Activated B cell treated with CpG ODN at 0.5 μM for 24 hours (primary cell): ENCODE measurements at regions of chr11 and their contacts with region 1.

Region 1: GRCh38 chr11:33736148-33736809 is at the start of gene CD59:
- DNase-seq: peak; percentile 82
- ATAC-seq: peak; percentile 81
- H3K4me3 Mint-ChIP-seq: peak within 1 kb of the TSS; percentile 88
- H3K27ac Mint-ChIP-seq: peak within 1 kb of the TSS; percentile 81
- H3K4me1 Mint-ChIP-seq: peaks cover 39% of the 10 kb centered on the region
- H3K27me3 Mint-ChIP-seq: no peaks in the 10 kb centered on the region
- CTCF ChIP-seq: no peak
- total RNA-seq, gene CD59: 92.9 and 94.1 TPM in 2 replicates

Region 2: DNA sequence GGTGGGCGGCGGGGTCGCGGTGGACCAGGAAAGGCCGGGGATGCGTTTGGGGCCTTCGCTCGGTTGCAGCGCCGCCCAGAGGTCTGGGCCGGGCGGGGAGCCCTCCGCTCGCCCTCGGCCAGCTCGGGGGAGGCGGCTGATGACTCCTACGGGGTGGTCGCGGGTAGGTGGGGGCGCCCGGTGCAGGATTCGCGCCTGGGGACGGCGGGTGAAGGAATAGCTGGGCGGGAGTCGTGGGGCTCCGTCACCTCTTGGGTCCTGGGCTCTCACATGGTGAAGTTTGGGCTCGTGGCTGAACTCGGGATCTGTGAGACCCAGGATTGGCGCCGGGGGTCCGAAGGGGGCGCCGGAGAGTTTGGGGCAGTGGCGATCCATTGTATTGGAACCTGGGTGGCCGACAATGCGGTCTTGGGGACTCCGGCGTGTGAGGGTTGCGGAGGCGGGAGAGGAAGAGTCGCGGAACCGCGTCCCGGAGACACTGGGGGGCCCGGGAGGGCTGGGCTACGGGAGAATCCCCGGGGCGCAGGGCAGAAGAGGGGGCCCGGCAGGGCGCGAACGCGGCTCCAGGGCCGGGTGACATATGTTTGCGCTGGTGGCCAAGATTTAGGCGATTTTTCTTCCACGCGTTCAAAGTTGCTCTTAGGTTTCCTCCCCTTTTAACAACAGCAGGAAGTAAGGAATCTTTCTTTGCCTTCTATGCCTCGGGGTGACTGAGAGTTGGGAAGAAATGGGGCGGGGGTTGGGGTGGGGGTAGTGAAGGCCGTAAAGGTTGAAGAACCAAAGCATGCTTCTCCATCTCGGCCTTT is 842.7 kb before region 1 on chr11:
- CTCF ChIA-PET with region 1: no interaction called
- POLR2A ChIA-PET with region 1: no interaction called
- intact Hi-C with region 1: loop called (anchors 10 kb)
- DNase-seq: peak; percentile 65
- ATAC-seq: peak; percentile 51
- H3K4me3 Mint-ChIP-seq: peak overlapping the region; percentile 94
- H3K27ac Mint-ChIP-seq: peak overlapping the region; percentile 82
- H3K4me1 Mint-ChIP-seq: peaks cover 30% of the 10 kb centered on the region
- H3K27me3 Mint-ChIP-seq: no peaks in the 10 kb centered on the region
- CTCF ChIP-seq: no peak

Region 3: DNA sequence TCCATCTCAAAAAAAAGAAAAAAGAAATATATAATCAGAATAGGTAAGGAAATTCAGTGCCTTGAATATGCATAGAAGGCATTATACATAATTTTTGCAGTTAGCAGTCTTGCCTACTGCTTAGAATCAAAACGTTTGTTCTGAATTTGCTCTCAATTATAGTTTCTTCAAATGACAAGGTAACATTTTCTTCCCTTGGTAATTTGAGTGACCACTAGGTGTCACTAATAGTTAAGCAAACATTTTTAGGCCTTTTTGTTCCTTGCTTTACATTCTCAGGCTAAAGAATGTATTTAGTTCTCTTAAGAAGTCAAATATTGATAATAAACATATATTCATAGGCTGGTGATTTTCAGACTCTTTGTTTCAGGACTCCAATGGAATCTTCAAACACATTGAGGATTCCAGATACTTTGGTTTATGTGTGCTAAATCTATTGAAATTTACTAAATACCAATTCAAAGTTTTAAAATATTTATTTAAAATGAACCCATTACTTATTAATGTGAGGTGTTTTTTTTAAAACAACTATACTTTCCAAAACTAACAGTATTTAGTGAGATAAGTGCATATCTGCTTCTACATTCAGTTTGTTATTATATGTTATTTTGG is 775.6 kb before region 1 on chr11:
- CTCF ChIA-PET with region 1: no interaction called
- POLR2A ChIA-PET with region 1: no interaction called
- intact Hi-C with region 1: loop called (anchors 5 kb)
- DNase-seq: no peak
- ATAC-seq: no peak
- H3K4me3 Mint-ChIP-seq: no peak overlapping the region
- H3K27ac Mint-ChIP-seq: no peak overlapping the region
- H3K4me1 Mint-ChIP-seq: no peaks in the 10 kb centered on the region
- H3K27me3 Mint-ChIP-seq: no peaks in the 10 kb centered on the region
- CTCF ChIP-seq: no peak

Region 4: DNA sequence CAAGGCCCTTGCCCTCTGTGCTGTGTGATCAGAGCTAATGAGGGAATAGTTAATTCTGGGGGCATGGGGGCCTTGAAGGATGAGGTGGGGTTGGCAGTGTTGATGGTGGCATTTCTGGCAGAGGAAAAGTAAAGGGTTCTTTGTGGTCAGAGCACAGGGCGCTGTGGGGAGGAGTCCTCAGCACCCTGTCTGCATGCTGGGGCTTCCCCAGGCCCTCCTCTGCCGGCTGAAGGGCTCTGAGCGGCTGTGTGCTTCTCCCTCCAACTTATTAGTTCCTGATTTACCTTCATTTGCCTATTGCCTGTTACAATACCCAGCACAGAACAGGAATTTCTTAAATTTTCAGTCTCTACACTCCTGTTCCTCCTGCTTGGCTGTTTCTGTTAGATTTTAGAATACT is 356.3 kb before region 1 on chr11:
- CTCF ChIA-PET with region 1: no interaction called
- POLR2A ChIA-PET with region 1: no interaction called
- intact Hi-C with region 1: loop called (anchors 5 kb)
- DNase-seq: peak; percentile 34
- ATAC-seq: peak; percentile 98
- H3K4me3 Mint-ChIP-seq: no peak overlapping the region
- H3K27ac Mint-ChIP-seq: no peak overlapping the region
- H3K4me1 Mint-ChIP-seq: peaks cover 6% of the 10 kb centered on the region
- H3K27me3 Mint-ChIP-seq: peaks cover 35% of the 10 kb centered on the region
- CTCF ChIP-seq: no peak

Region 5: GRCh38 chr11:33700425-33701271 is 35.6 kb before region 1 on chr11 and contains the start of gene C11orf91:
- CTCF ChIA-PET with region 1: no interaction called
- POLR2A ChIA-PET with region 1: interaction called, 15 read pairs
- intact Hi-C with region 1: loop called (anchors 1 kb)
- DNase-seq: peak; percentile 97
- ATAC-seq: peak; percentile 98
- H3K4me3 Mint-ChIP-seq: peak within 1 kb of the TSS; percentile 91
- H3K27ac Mint-ChIP-seq: peak within 1 kb of the TSS; percentile 47
- H3K4me1 Mint-ChIP-seq: peaks cover 13% of the 10 kb centered on the region
- H3K27me3 Mint-ChIP-seq: peaks cover 2% of the 10 kb centered on the region
- CTCF ChIP-seq: no peak
- total RNA-seq, gene C11orf91: 0.49 TPM in 1 of 2 replicates, not detected in the other

Region 6: DNA sequence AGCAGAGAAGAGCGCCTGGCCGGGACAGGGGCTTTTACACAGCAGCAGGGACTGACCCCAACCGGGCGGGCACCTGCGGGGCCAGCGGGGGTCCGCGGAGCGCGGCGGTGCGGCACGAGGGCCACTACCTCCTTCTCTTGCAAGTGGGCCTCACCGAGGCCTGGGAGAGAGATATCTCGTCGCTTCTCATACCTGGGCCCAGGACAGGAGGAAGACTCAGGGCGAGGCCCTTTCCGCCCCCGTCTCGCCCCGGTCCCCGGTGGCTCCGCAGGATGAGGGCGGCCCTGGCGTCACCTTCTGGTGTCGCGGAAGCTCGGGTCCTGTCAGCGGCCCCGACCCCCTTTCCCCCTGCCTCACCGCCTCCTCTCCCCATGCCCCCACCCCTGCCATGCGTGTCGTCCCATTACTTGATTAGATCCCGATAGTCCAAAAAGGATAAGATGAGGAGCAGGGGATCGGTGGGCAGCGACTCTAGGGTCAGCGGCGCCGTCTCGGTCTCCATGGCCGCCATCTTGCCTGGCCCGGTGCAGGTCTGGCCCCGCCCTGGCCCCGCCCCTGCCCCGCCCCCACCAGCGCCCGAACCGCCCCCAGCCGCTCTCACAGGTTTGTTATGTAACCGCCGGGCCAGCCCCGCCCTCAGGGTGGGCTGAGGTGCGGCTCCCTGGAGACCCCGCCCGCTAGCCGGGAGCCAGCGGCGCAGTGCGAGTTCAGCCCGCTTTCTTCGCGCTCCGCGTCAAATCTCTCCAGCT is 37.9 kb after region 1 on chr11 and contains the start of gene FBXO3:
- CTCF ChIA-PET with region 1: no interaction called
- POLR2A ChIA-PET with region 1: interaction called, 10 read pairs
- intact Hi-C with region 1: loop called (anchors 1 kb)
- DNase-seq: peak; percentile 80
- ATAC-seq: peak; percentile 92
- H3K4me3 Mint-ChIP-seq: peak within 1 kb of the TSS; percentile 96
- H3K27ac Mint-ChIP-seq: peak within 1 kb of the TSS; percentile 94
- H3K4me1 Mint-ChIP-seq: peaks cover 38% of the 10 kb centered on the region
- H3K27me3 Mint-ChIP-seq: peaks cover 15% of the 10 kb centered on the region
- CTCF ChIP-seq: no peak
- total RNA-seq, gene FBXO3: 22.3 and 23.5 TPM in 2 replicates